Activated CD4-positive, alpha-beta T cell treated with anti-CD3 and anti-CD28 coated beads, Interleukin-2, amount 10 ng/mL, durations not matched to agents 24 days and 14 days (primary cell): ENCODE measurements at regions of chr2 and their contacts with region 1.

Region 1: DNA sequence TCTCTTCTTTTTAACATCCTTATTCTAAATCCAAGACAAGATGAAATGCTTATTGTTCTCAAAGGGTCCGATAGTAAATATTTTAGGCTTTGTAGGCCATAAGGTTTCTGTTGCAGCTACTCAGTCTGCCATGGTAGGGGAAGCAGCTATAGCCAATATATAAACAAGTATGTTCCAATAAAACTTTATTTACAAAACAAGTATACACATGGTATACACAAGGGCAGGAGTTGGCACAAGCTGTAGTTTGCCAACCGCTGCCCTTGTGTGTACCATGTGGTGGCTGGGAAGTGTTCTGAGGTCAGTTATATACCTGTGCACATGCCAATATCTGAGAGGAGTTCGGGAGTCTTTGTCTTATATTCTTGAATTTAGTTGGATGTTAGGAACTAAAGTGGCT is 126.0 kb upstream of the DNMT3A start:
- DNase-seq: no peak
- H3K4me3 Mint-ChIP-seq: no peak overlapping the region
- H3K27ac Mint-ChIP-seq: no peak overlapping the region
- H3K4me1 Mint-ChIP-seq: no peaks in the 10 kb centered on the region
- H3K27me3 Mint-ChIP-seq: no peaks in the 10 kb centered on the region

Region 2: GRCh38 chr2:25131567-25132298 is 336.0 kb before region 1 on chr2:
- intact Hi-C with region 1: no loop called
- DNase-seq: peak; percentile 70
- H3K4me3 Mint-ChIP-seq: peak overlapping the region; percentile 77
- H3K27ac Mint-ChIP-seq: no peak overlapping the region
- H3K4me1 Mint-ChIP-seq: peaks cover 15% of the 10 kb centered on the region
- H3K27me3 Mint-ChIP-seq: peaks cover 57% of the 10 kb centered on the region

Region 3: GRCh38 chr2:25424426-25425028 is 43.2 kb before region 1 on chr2:
- intact Hi-C with region 1: loop called (anchors 5 kb)
- DNase-seq: no peak
- H3K4me3 Mint-ChIP-seq: no peak overlapping the region
- H3K27ac Mint-ChIP-seq: no peak overlapping the region
- H3K4me1 Mint-ChIP-seq: peaks cover 5% of the 10 kb centered on the region
- H3K27me3 Mint-ChIP-seq: no peaks in the 10 kb centered on the region

Region 4: DNA sequence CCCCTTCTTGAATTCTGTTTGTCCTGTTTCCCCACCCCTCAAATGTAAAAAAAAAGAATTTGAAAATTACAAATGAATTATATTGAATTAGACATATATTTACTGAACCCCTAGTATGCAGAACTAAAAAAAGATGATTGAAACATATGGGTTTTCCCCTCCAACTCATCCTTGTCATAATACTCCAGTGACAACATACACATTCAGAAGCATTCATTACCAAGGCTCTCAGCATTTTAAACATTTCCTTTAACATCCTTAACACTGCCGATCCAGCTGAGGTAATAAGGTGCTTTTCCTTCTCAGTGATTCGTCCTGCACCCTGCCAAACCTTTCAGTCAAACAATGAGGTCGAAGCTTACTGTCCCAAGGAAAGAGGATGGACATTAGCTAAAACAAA is 258.8 kb after region 1 on chr2:
- intact Hi-C with region 1: no loop called
- DNase-seq: no peak
- H3K4me3 Mint-ChIP-seq: no peak overlapping the region
- H3K27ac Mint-ChIP-seq: no peak overlapping the region
- H3K4me1 Mint-ChIP-seq: peaks cover 6% of the 10 kb centered on the region
- H3K27me3 Mint-ChIP-seq: peaks cover 12% of the 10 kb centered on the region

Region 5: GRCh38 chr2:25833566-25833965 is 365.8 kb after region 1 on chr2:
- intact Hi-C with region 1: no loop called
- DNase-seq: no peak
- H3K4me3 Mint-ChIP-seq: no peak overlapping the region
- H3K27ac Mint-ChIP-seq: peak overlapping the region; percentile 45
- H3K4me1 Mint-ChIP-seq: peaks cover 38% of the 10 kb centered on the region
- H3K27me3 Mint-ChIP-seq: no peaks in the 10 kb centered on the region